Esophagus squamous epithelium (tissue), 5 donors: ENCODE measurements at regions of chr4 and their contacts with region 1.

Region 1: GRCh38 chr4:152500800-152501434 is 35.0 kb downstream of the FBXW7 start:
- DNase-seq: peak; percentile 1
- H3K4me3 ChIP-seq: no peak overlapping the region
- H3K27ac ChIP-seq: no peak overlapping the region
- H3K4me1 ChIP-seq: peaks cover 0 to 4% (median 0%) of the 10 kb centered on the region in 3 donors
- H3K27me3 ChIP-seq: no peaks in the 10 kb centered on the region
- CTCF ChIP-seq: peak; percentile 57 to 84 (median 74)
- POLR2A ChIP-seq: no peak

Region 2: GRCh38 chr4:152243896-152244595 is 256.9 kb before region 1 on chr4:
- intact Hi-C with region 1: no loop called
- DNase-seq: no peak
- H3K4me3 ChIP-seq: no peak overlapping the region
- H3K27ac ChIP-seq: peak overlapping the region in 2 of 4 donors; percentile 3 to 23
- H3K4me1 ChIP-seq: peaks cover 0 to 6% (median 0%) of the 10 kb centered on the region in 3 donors
- H3K27me3 ChIP-seq: no peaks in the 10 kb centered on the region
- CTCF ChIP-seq: no peak
- POLR2A ChIP-seq: no peak

Region 3: GRCh38 chr4:152640058-152640833 is 139.3 kb after region 1 on chr4:
- intact Hi-C with region 1: loop called (anchors 5 kb)
- DNase-seq: no peak
- H3K4me3 ChIP-seq: no peak overlapping the region
- H3K27ac ChIP-seq: no peak overlapping the region
- H3K4me1 ChIP-seq: peaks cover 0 to 8% (median 0%) of the 10 kb centered on the region in 3 donors
- H3K27me3 ChIP-seq: no peaks in the 10 kb centered on the region
- CTCF ChIP-seq: peak; percentile 31 to 69 (median 52)
- POLR2A ChIP-seq: no peak

Region 4: GRCh38 chr4:152763796-152764195 is 262.9 kb after region 1 on chr4:
- intact Hi-C with region 1: no loop called
- DNase-seq: no peak
- H3K4me3 ChIP-seq: no peak overlapping the region
- H3K27ac ChIP-seq: no peak overlapping the region
- H3K4me1 ChIP-seq: no peaks in the 10 kb centered on the region
- H3K27me3 ChIP-seq: no peaks in the 10 kb centered on the region
- CTCF ChIP-seq: no peak
- POLR2A ChIP-seq: no peak